Activated CD4-positive, alpha-beta T cell treated with anti-CD3 and anti-CD28 coated beads, Interleukin-2, amount 10 ng/mL, durations not matched to agents 7 days and 5 days (primary cell): ENCODE measurements at regions of chr19 and their contacts with region 1.

Region 1: GRCh38 chr19:14366498-14366915 is 14.7 kb upstream of the ADGRE5 start:
- DNase-seq: peak; percentile 96
- H3K4me3 Mint-ChIP-seq: peak overlapping the region; percentile 50
- H3K27ac Mint-ChIP-seq: peak overlapping the region; percentile 99
- H3K4me1 Mint-ChIP-seq: peaks cover 76% of the 10 kb centered on the region
- H3K27me3 Mint-ChIP-seq: no peaks in the 10 kb centered on the region

Region 2: GRCh38 chr19:14310055-14310454 is 56.5 kb before region 1 on chr19:
- CTCF ChIA-PET with region 1: no interaction called
- POLR2A ChIA-PET with region 1: no interaction called
- DNase-seq: no peak
- H3K4me3 Mint-ChIP-seq: no peak overlapping the region
- H3K27ac Mint-ChIP-seq: no peak overlapping the region
- H3K4me1 Mint-ChIP-seq: peaks cover 21% of the 10 kb centered on the region
- H3K27me3 Mint-ChIP-seq: no peaks in the 10 kb centered on the region

Region 3: GRCh38 chr19:14405758-14406644 is 39.5 kb after region 1 on chr19:
- CTCF ChIA-PET with region 1: interaction called, 27 read pairs
- POLR2A ChIA-PET with region 1: interaction called, 4 read pairs
- DNase-seq: peak; percentile 88
- H3K4me3 Mint-ChIP-seq: no peak overlapping the region
- H3K27ac Mint-ChIP-seq: peak overlapping the region; percentile 75
- H3K4me1 Mint-ChIP-seq: peaks cover 31% of the 10 kb centered on the region
- H3K27me3 Mint-ChIP-seq: no peaks in the 10 kb centered on the region